ENCODE measurements at regions of chr22 and their contacts with region 1.

Region 1: DNA sequence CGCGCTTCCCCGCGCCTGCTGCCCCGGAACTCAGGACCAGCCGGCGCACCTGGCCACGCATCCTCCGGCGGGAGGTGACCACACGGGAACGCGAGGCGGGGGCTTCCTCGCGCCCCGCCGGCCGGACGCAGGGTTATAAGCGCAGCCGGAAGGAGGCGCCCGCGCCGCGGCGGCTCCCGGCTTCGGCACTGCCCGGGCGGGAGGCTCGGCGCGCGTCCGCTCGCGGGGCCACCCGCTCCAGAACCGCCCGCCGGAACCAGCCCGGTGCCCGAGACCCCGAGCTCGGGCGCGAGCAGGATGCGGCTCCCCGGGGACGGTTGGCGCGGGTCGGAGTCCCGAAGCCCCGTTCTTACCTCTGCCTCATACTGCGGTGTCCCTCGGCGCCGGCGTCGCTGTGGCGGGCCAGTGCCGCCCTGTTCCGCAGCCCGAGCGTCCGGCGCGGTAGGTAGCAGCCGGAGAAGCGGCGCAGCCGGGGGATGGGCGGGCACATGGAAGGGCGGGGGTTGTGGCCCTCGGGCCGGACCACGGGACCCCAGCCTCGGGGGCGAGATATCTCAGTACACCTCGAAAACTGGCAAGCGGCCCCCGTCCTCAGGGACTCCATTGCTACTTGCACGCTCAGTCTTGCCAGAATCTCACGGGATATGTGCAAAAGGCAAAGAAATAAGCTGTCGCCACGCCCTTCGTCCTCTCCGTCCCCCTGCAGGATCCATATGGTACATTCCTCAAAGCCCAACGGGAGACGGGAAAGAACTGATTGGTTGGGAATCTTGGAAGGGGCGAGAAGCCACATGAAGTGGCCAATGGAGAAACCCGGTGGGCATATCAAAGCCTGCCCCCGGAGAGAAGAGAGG is 23.1 kb downstream of the MICAL3 start:
- DNase-seq: peak; percentile 90 to 93 (median 92)
- H3K4me3 ChIP-seq: peak overlapping the region; percentile 68
- H3K27ac ChIP-seq: peak overlapping the region; percentile 77 to 98
- H3K4me1 ChIP-seq: peaks cover 5% of the 10 kb centered on the region
- H3K27me3 ChIP-seq: no peaks in the 10 kb centered on the region
- CTCF ChIP-seq: peak in 2 of 3 donors; percentile 52 to 64
- EP300 ChIP-seq: no peak
- POLR2A ChIP-seq: peak; percentile 73

Region 2: GRCh38 chr22:17910561-17911311 is 90.5 kb before region 1 on chr22:
- intact Hi-C with region 1: loop called in 1 of 4 experiments (anchors 10 kb)
- DNase-seq: peak; percentile 71 to 77 (median 73)
- H3K4me3 ChIP-seq: no peak overlapping the region
- H3K27ac ChIP-seq: peak overlapping the region in 1 of 2 donors; percentile 54
- H3K4me1 ChIP-seq: peaks cover 12% of the 10 kb centered on the region
- H3K27me3 ChIP-seq: no peaks in the 10 kb centered on the region
- CTCF ChIP-seq: peak in 2 of 3 donors; percentile 4 to 11
- EP300 ChIP-seq: peak; percentile 27
- POLR2A ChIP-seq: no peak

Region 3: DNA sequence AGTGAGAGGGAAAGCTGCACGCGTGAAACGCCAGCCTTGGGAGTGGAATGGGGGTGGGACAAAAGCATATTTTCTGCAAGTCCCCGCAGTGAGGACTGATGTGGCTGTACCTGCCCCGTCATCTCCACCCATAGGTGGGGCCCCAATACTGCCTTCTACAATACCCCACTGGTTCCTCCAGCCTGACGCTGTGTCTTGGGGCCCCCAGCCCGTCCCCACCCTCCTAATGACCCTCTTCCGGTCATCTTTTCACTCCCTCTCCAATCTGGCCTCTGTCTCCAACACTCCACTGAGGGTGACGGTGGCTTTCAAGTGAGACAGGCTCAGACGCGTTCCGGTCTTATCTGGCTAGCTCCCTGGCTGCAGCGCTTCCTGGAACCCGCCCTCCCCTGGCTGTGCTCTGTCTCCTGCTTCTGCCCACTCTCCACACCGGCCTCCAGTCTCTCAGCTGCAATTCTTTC is 81.1 kb before region 1 on chr22:
- intact Hi-C with region 1: loop called in 2 of 4 experiments (anchors 5 to 10 kb)
- DNase-seq: peak; percentile 58 to 64 (median 61)
- H3K4me3 ChIP-seq: no peak overlapping the region
- H3K27ac ChIP-seq: peak overlapping the region in 1 of 2 donors; percentile 55
- H3K4me1 ChIP-seq: peaks cover 47% of the 10 kb centered on the region
- H3K27me3 ChIP-seq: no peaks in the 10 kb centered on the region
- CTCF ChIP-seq: no peak
- EP300 ChIP-seq: no peak
- POLR2A ChIP-seq: no peak

Region 4: GRCh38 chr22:18045794-18046193 is 44.5 kb after region 1 on chr22:
- intact Hi-C with region 1: loop called in 1 of 4 experiments (anchors 1 kb)
- DNase-seq: no peak
- H3K4me3 ChIP-seq: no peak overlapping the region
- H3K27ac ChIP-seq: peak overlapping the region in 1 of 2 donors; percentile 92
- H3K4me1 ChIP-seq: peaks cover 17% of the 10 kb centered on the region
- H3K27me3 ChIP-seq: no peaks in the 10 kb centered on the region
- CTCF ChIP-seq: no peak
- EP300 ChIP-seq: no peak
- POLR2A ChIP-seq: no peak

Region 5: DNA sequence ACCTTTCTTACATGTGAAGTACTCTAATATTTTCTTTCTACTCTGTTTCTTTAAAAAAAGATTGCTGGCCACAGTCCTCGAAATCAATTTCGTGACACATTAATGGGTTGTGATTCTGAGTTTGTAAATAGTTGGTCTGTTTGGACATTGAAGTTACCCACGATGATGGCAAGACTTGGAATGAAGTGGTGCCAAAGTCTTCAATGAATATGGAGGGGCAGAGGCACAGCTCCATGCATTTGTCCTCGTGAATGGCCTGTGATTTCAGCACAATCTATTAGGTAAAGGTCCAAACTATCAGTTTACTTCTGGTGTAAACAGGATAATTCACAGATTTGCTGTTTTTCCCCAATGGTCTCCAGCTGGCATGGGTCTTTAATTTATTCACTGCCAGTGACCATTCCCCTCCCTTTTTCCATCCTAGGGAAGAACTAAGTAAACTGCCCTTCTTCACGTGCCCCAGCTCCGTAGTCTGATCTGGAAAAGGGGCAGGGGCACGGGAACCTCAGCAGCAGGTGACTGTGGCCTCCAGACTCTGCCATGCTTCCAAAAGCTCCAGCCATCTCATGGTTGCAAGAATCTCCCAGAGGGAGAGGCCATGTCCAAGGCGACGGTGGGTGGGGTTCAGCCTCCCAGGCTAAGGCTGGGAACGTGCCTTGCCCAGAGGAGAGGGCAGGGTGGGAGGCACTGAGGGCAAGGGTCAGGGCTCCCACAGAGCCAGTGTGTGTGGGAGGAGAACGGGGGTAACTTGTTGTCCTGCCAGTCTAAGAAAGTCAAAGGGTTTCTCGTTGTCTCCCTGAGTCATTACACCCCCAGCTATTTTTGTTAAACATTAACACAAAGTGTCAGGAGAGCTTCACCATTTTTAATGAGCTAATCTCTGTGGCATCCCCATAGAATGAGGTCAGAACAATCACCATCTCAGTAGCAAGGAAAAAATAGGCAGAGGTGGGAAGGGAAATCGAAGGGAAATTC is 59.7 kb after region 1 on chr22:
- intact Hi-C with region 1: no loop called
- DNase-seq: no peak
- H3K4me3 ChIP-seq: no peak overlapping the region
- H3K27ac ChIP-seq: no peak overlapping the region
- H3K4me1 ChIP-seq: peaks cover 11% of the 10 kb centered on the region
- H3K27me3 ChIP-seq: no peaks in the 10 kb centered on the region
- CTCF ChIP-seq: no peak
- EP300 ChIP-seq: no peak
- POLR2A ChIP-seq: no peak